CD4-positive, alpha-beta memory T cell (primary cell): ENCODE measurements at regions of chr7 and their contacts with region 1.

Region 1: DNA sequence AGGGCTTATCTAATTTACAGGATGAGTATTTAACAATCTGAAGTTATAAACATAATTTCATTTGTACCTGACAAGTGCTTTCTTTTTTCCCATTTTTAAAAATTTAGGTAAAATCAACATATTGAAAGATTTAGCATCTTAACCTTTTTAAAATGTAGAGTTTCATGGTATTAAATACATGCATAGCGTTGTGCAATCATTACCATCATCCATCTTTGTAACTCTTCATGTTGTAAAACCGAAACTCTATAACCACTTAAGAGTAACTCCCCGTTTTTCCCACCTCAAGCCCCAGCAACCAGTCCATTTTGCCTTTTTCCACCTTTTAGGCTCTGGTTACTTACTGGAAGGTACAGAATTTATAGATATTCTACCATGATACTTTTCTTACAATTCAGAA is 892.5 kb downstream of the DNAJB9 start:
- DNase-seq: no peak
- H3K4me3 ChIP-seq: no peak overlapping the region
- H3K4me3 Mint-ChIP-seq: no peak overlapping the region
- H3K27ac ChIP-seq: no peak overlapping the region
- H3K27ac Mint-ChIP-seq: no peak overlapping the region
- H3K4me1 ChIP-seq: no peaks in the 10 kb centered on the region
- H3K4me1 Mint-ChIP-seq: no peaks in the 10 kb centered on the region
- H3K27me3 ChIP-seq: no peaks in the 10 kb centered on the region
- H3K27me3 Mint-ChIP-seq: no peaks in the 10 kb centered on the region

Region 2: DNA sequence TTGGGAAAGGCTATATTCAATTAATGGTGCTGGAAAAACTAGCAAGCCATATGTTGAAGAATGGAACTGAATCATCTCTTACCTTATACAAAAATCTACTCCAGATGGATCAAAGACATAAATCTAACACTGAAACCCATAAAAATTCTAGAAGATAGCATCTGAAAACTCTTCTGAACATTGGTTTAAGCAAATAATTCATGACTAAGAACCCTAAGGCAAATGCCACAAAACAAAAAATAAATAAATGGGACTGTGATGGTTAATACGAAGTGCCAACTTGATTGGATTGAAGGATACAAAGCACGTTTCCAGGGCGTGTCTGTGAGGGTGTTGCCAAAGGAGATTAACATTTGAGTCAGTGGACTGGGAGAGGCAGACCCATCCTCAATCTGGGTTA is 237.5 kb after region 1 on chr7:
- CTCF ChIA-PET with region 1: no interaction called
- POLR2A ChIA-PET with region 1: no interaction called
- intact Hi-C with region 1: loop called (anchors 10 kb)
- DNase-seq: no peak
- H3K4me3 ChIP-seq: no peak overlapping the region
- H3K4me3 Mint-ChIP-seq: no peak overlapping the region
- H3K27ac ChIP-seq: no peak overlapping the region
- H3K27ac Mint-ChIP-seq: no peak overlapping the region
- H3K4me1 ChIP-seq: no peaks in the 10 kb centered on the region
- H3K4me1 Mint-ChIP-seq: no peaks in the 10 kb centered on the region
- H3K27me3 ChIP-seq: no peaks in the 10 kb centered on the region
- H3K27me3 Mint-ChIP-seq: no peaks in the 10 kb centered on the region